ENCODE measurements at regions of chr12 and their contacts with region 1.

Region 1: DNA sequence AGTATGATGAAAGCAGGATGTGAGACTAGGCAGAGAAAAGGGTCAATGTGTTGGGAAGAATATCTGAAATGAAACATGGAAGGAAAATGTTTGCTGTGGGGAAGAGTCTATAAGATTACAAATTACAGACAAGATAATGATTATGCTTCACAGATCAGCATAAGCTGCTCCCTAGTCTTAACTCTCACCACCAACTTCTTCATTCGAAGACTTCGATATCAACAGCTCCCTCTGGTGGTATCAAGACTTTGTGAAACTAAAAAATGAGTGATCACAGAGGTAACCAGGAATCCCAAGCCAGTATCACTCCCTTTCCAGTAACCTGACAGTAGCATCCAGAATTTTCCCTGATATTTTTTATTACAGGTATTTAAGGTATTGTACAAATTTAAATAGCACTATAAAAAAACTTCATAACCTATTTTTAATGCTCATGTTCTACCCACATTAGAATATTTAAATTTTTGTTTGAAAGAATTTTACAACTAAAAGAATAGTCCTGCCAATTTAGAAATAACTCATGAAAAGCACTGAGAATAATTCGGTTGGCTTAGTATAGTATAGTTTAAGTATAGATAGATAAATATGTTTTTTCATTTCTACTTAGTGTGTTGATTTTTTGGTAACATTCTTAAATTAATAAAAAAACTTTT is 84.4 kb downstream of the C2CD5 start:
- DNase-seq: peak in 1 of 2 donors; percentile 69
- ATAC-seq: peak in 2 of 3 donors; percentile 62 to 75
- H3K4me3 ChIP-seq: no peak overlapping the region
- H3K4me3 Mint-ChIP-seq: no peak overlapping the region
- H3K27ac ChIP-seq: no peak overlapping the region
- H3K27ac Mint-ChIP-seq: no peak overlapping the region
- H3K4me1 ChIP-seq: no peaks in the 10 kb centered on the region
- H3K4me1 Mint-ChIP-seq: no peaks in the 10 kb centered on the region
- H3K27me3 ChIP-seq: no peaks in the 10 kb centered on the region
- H3K27me3 Mint-ChIP-seq: no peaks in the 10 kb centered on the region
- CTCF ChIP-seq: peak; percentile 75

Region 2: GRCh38 chr12:21697904-21698630 is 761.9 kb before region 1 on chr12:
- intact Hi-C with region 1: loop called (anchors 2 kb)
- DNase-seq: peak in 1 of 2 donors; percentile 69
- ATAC-seq: no peak
- H3K4me3 ChIP-seq: no peak overlapping the region
- H3K4me3 Mint-ChIP-seq: no peak overlapping the region
- H3K27ac ChIP-seq: no peak overlapping the region
- H3K27ac Mint-ChIP-seq: no peak overlapping the region
- H3K4me1 ChIP-seq: no peaks in the 10 kb centered on the region
- H3K4me1 Mint-ChIP-seq: peaks cover 4 to 5% of the 10 kb centered on the region in 2 donors
- H3K27me3 ChIP-seq: no peaks in the 10 kb centered on the region
- H3K27me3 Mint-ChIP-seq: peaks cover 0 to 7% of the 10 kb centered on the region in 2 donors
- CTCF ChIP-seq: peak; percentile 53

Region 3: GRCh38 chr12:22083167-22083566 is 376.8 kb before region 1 on chr12:
- intact Hi-C with region 1: loop called (anchors 1 kb)
- DNase-seq: peak in 1 of 2 donors; percentile 73
- ATAC-seq: peak in 2 of 3 donors; percentile 38
- H3K4me3 ChIP-seq: no peak overlapping the region
- H3K4me3 Mint-ChIP-seq: no peak overlapping the region
- H3K27ac ChIP-seq: no peak overlapping the region
- H3K27ac Mint-ChIP-seq: no peak overlapping the region
- H3K4me1 ChIP-seq: no peaks in the 10 kb centered on the region
- H3K4me1 Mint-ChIP-seq: no peaks in the 10 kb centered on the region
- H3K27me3 ChIP-seq: no peaks in the 10 kb centered on the region
- H3K27me3 Mint-ChIP-seq: peaks cover 1 to 22% of the 10 kb centered on the region in 2 donors
- CTCF ChIP-seq: peak; percentile 34

Region 4: DNA sequence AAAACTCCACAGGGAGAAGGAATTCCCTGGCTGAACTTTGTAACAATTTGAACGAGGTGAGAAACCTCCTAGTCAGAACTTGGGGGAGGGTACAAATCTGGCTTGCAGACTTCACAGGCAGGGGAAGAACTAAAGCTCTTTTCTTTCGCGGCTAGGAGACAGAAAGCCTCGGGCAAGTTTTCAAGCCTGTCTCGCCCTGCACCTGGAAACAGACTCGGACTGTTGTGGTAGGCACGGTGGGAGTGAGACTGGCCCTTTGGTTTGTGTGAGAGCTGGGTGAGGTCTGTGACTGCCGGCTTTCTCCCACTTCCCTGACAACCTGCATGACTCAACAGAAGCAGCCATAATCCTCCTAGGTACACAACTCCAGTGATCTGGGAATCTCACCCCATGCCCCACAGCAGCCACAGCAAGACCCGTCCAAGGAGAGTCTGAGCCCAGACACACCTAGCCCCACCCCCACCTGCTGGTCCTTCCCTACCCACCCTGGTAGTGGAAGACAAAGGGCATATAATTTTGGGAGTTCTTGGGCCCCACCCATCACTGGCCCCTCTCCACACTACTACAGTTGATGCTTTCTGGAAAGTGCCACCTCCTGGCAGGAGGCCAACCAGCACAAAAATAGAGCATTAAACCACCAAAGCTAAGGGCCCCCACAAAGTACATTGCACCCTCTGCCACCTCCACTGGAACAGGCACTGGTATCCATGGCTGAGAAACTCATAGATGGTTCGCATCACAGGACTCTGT is 22.8 kb before region 1 on chr12:
- intact Hi-C with region 1: no loop called
- DNase-seq: no peak
- ATAC-seq: no peak
- H3K4me3 ChIP-seq: no peak overlapping the region
- H3K4me3 Mint-ChIP-seq: no peak overlapping the region
- H3K27ac ChIP-seq: no peak overlapping the region
- H3K27ac Mint-ChIP-seq: no peak overlapping the region
- H3K4me1 ChIP-seq: no peaks in the 10 kb centered on the region
- H3K4me1 Mint-ChIP-seq: no peaks in the 10 kb centered on the region
- H3K27me3 ChIP-seq: no peaks in the 10 kb centered on the region
- H3K27me3 Mint-ChIP-seq: peaks cover 0 to 5% of the 10 kb centered on the region in 2 donors
- CTCF ChIP-seq: no peak

Measured in natural killer cell (primary cell).